GM12878 (cell line): ENCODE measurements at regions of chr22 and their contacts with region 1.

Region 1: GRCh38 chr22:23128269-23129108 is 13.3 kb downstream of the RSPH14 start:
- DNase-seq: no peak
- ATAC-seq: peak; percentile 97
- H3K4me3 ChIP-seq: no peak overlapping the region
- H3K27ac ChIP-seq: no peak overlapping the region
- H3K4me1 ChIP-seq: no peaks in the 10 kb centered on the region
- H3K27me3 ChIP-seq: no peaks in the 10 kb centered on the region
- CTCF ChIP-seq: peak; percentile 80 to 90 (median 82)
- EP300 ChIP-seq: no peak
- POLR2A ChIP-seq: no peak
- RAD21 ChIP-seq: peak; percentile 95

Region 2: GRCh38 chr22:22181341-22181850 is 947.1 kb before region 1 on chr22:
- CTCF ChIA-PET with region 1: no interaction called
- POLR2A ChIA-PET with region 1: no interaction called
- RAD21 ChIA-PET with region 1: no interaction called
- SMC1A ChIA-PET with region 1: no interaction called
- in situ Hi-C with region 1: loop called (anchors 5 kb)
- intact Hi-C with region 1: no loop called
- DNase-seq: no peak
- ATAC-seq: no peak
- H3K4me3 ChIP-seq: no peak overlapping the region
- H3K27ac ChIP-seq: no peak overlapping the region
- H3K4me1 ChIP-seq: peaks cover 3% of the 10 kb centered on the region; the same call in 1 of the 2 replicates
- H3K27me3 ChIP-seq: no peaks in the 10 kb centered on the region
- CTCF ChIP-seq: no peak
- EP300 ChIP-seq: no peak
- POLR2A ChIP-seq: no peak
- RAD21 ChIP-seq: no peak

Region 3: GRCh38 chr22:22770280-22770871 is 358.1 kb before region 1 on chr22:
- CTCF ChIA-PET with region 1: no interaction called
- POLR2A ChIA-PET with region 1: no interaction called
- RAD21 ChIA-PET with region 1: interaction called, 3 read pairs
- SMC1A ChIA-PET with region 1: no interaction called
- in situ Hi-C with region 1: no loop called
- intact Hi-C with region 1: loop called (anchors 10 kb)
- DNase-seq: no peak
- ATAC-seq: peak; percentile 58
- H3K4me3 ChIP-seq: no peak overlapping the region
- H3K27ac ChIP-seq: no peak overlapping the region
- H3K4me1 ChIP-seq: no peaks in the 10 kb centered on the region
- H3K27me3 ChIP-seq: no peaks in the 10 kb centered on the region
- CTCF ChIP-seq: peak; percentile 29 to 61 (median 43); a peak in 4 of 6 replicates
- EP300 ChIP-seq: no peak
- POLR2A ChIP-seq: no peak
- RAD21 ChIP-seq: no peak

Region 4: DNA sequence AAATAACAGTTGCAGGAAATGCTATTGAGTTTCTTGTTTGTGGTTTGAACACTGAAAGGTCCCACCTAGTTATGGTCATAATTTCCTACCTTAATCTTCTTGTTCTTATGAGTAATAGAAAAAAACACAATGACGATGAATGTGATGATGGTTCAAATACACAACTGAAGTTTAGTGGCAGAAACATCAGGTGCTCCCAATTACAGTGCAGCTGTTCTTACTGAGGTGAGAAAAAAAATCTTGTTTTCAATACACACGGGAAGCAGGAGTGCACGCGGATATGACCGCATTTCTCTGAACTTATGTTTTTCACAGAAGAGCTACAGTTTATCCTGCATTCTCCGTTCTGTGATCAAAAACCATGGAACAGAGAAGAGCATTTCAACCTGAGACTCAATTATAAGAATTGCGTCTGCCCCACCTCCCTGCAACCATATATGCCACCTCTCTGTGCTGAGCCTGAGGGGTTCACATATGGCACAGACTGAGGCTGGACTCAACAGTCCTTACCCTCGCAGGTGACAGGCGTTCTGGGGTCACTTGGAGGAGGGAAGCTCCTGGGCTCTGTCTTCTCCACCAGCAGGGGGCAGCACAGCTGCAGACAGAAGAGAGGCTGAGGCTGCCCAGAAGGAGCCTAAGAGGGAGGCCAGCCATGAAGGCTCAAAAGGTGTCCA is 340.6 kb before region 1 on chr22:
- CTCF ChIA-PET with region 1: interaction called, 3 read pairs
- POLR2A ChIA-PET with region 1: no interaction called
- RAD21 ChIA-PET with region 1: no interaction called
- SMC1A ChIA-PET with region 1: interaction called, 3 read pairs
- in situ Hi-C with region 1: loop called (anchors 10 kb)
- intact Hi-C with region 1: no loop called
- DNase-seq: no peak
- ATAC-seq: peak; percentile 92
- H3K4me3 ChIP-seq: no peak overlapping the region
- H3K27ac ChIP-seq: no peak overlapping the region
- H3K4me1 ChIP-seq: no peaks in the 10 kb centered on the region
- H3K27me3 ChIP-seq: no peaks in the 10 kb centered on the region
- CTCF ChIP-seq: peak; percentile 49 to 79 (median 59)
- EP300 ChIP-seq: no peak
- POLR2A ChIP-seq: no peak
- RAD21 ChIP-seq: no peak

Region 5: GRCh38 chr22:23088199-23088604 is 40.3 kb before region 1 on chr22:
- CTCF ChIA-PET with region 1: no interaction called
- POLR2A ChIA-PET with region 1: no interaction called
- RAD21 ChIA-PET with region 1: no interaction called
- SMC1A ChIA-PET with region 1: no interaction called
- in situ Hi-C with region 1: no loop called
- intact Hi-C with region 1: no loop called
- DNase-seq: no peak
- ATAC-seq: no peak
- H3K4me3 ChIP-seq: no peak overlapping the region
- H3K27ac ChIP-seq: no peak overlapping the region
- H3K4me1 ChIP-seq: no peaks in the 10 kb centered on the region
- H3K27me3 ChIP-seq: no peaks in the 10 kb centered on the region
- CTCF ChIP-seq: no peak
- EP300 ChIP-seq: no peak
- POLR2A ChIP-seq: no peak
- RAD21 ChIP-seq: no peak

Region 6: GRCh38 chr22:23106344-23106743 is 22.1 kb before region 1 on chr22:
- CTCF ChIA-PET with region 1: interaction called, 11 read pairs
- POLR2A ChIA-PET with region 1: no interaction called
- RAD21 ChIA-PET with region 1: no interaction called
- SMC1A ChIA-PET with region 1: no interaction called
- in situ Hi-C with region 1: no loop called
- intact Hi-C with region 1: no loop called
- DNase-seq: no peak
- ATAC-seq: no peak
- H3K4me3 ChIP-seq: no peak overlapping the region
- H3K27ac ChIP-seq: no peak overlapping the region
- H3K4me1 ChIP-seq: no peaks in the 10 kb centered on the region
- H3K27me3 ChIP-seq: no peaks in the 10 kb centered on the region
- CTCF ChIP-seq: no peak
- EP300 ChIP-seq: no peak
- POLR2A ChIP-seq: no peak
- RAD21 ChIP-seq: no peak

Region 7: GRCh38 chr22:23113067-23113846 is 15.2 kb before region 1 on chr22:
- CTCF ChIA-PET with region 1: interaction called, 11 read pairs
- POLR2A ChIA-PET with region 1: no interaction called
- RAD21 ChIA-PET with region 1: interaction called, 3 read pairs
- SMC1A ChIA-PET with region 1: no interaction called
- in situ Hi-C with region 1: no loop called
- intact Hi-C with region 1: no loop called
- DNase-seq: no peak
- ATAC-seq: peak; percentile 58
- H3K4me3 ChIP-seq: no peak overlapping the region
- H3K27ac ChIP-seq: no peak overlapping the region
- H3K4me1 ChIP-seq: no peaks in the 10 kb centered on the region
- H3K27me3 ChIP-seq: no peaks in the 10 kb centered on the region
- CTCF ChIP-seq: no peak
- EP300 ChIP-seq: no peak
- POLR2A ChIP-seq: no peak
- RAD21 ChIP-seq: no peak